Heart left ventricle (tissue), 16 donors: ENCODE measurements at regions of chr22 and their contacts with region 1.

Region 1: DNA sequence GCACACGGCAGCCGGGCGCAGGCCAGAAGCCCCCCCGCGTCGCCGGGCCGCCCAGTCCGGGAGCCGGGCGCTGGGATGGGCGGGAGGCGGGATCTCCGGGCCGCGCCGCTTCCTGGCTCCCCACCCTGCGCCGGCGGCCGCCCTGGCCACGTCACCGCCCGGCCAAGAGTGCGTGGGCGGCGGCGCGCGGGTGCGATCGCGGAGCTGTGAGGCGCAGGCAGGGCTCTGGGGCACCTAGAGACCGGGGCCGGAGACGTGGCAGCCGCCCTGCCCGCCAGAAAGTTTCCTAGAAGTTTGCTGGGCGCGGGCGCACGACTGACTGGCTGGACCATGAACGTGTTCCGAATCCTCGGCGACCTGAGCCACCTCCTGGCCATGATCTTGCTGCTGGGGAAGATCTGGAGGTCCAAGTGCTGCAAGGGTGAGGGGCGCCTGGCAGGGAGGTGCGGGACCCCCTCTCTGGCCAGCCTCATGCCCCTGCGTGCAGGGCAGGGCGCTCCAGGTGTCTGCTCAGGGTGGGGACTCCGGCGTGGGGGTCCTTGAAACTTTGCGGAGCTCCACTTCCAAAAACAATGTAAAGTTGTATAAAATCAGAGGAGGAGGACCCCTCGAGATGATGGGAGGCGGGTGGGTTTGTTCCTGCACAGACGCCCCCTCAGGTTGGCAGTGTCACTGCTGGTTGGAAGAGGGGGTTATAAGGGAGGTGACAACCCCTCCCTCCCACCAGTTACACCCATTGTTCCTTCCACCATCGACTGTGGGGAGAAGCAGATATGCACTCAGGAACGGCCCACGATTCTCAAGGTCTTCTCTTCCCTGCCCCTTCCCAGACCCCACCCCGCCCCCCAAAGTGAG is at the start of gene KDELR3:
- DNase-seq: peak; percentile 74 to 86 (median 79)
- ATAC-seq: peak; percentile 43 to 86 (median 82)
- H3K4me3 ChIP-seq: peak within 1 kb of the TSS; percentile 44 to 85 (median 68)
- H3K27ac ChIP-seq: peak within 1 kb of the TSS in 9 of 12 donors; percentile 34 to 83 (median 55)
- H3K4me1 ChIP-seq: peaks cover 0 to 29% (median 18%) of the 10 kb centered on the region in 12 donors
- H3K27me3 ChIP-seq: peaks cover 0 to 27% (median 0%) of the 10 kb centered on the region in 9 donors
- CTCF ChIP-seq: peak in 3 of 12 donors; percentile 16 to 28 (median 24)
- POLR2A ChIP-seq: peak in 1 of 2 donors; percentile 27
- total RNA-seq, gene KDELR3: 4.4 to 15.5 (median 8.5) TPM

Region 2: GRCh38 chr22:38494498-38494897 is 26.4 kb after region 1 on chr22:
- intact Hi-C with region 1: loop called in 1 of 10 experiments (anchors 1 kb)
- DNase-seq: no peak
- ATAC-seq: no peak
- H3K4me3 ChIP-seq: no peak overlapping the region
- H3K27ac ChIP-seq: no peak overlapping the region
- H3K4me1 ChIP-seq: peaks cover 4 to 48% (median 38%) of the 10 kb centered on the region in 12 donors
- H3K27me3 ChIP-seq: no peaks in the 10 kb centered on the region
- CTCF ChIP-seq: no peak
- POLR2A ChIP-seq: no peak